ENCODE measurements at regions of chr9 and their contacts with region 1.

Region 1: GRCh38 chr9:130343445-130343918 is 77.9 kb downstream of the HMCN2 start:
- DNase-seq: no peak
- ATAC-seq: peak in 1 of 2 experiments; percentile 62; a peak in 3 of 6 replicates
- H3K4me3 ChIP-seq: no peak overlapping the region
- H3K27ac ChIP-seq: no peak overlapping the region
- H3K4me1 ChIP-seq: no peaks in the 10 kb centered on the region
- CTCF ChIP-seq: peak; percentile 74
- EP300 ChIP-seq: no peak
- POLR2A ChIP-seq: no peak
- RAD21 ChIP-seq: peak; percentile 77 to 82

Region 2: GRCh38 chr9:130327070-130327780 is 16.3 kb before region 1 on chr9:
- CTCF ChIA-PET with region 1: interaction called, 11 read pairs
- POLR2A ChIA-PET with region 1: no interaction called
- DNase-seq: peak in 1 of 2 experiments; percentile 41
- ATAC-seq: peak; percentile 55 to 77; a peak in 4 of 6 replicates
- H3K4me3 ChIP-seq: no peak overlapping the region
- H3K27ac ChIP-seq: no peak overlapping the region
- H3K4me1 ChIP-seq: peaks cover 12% of the 10 kb centered on the region; the same call in 2 of the 3 replicates
- CTCF ChIP-seq: peak; percentile 12; the same call in 1 of the 3 replicates
- EP300 ChIP-seq: no peak
- POLR2A ChIP-seq: no peak
- RAD21 ChIP-seq: 0 out of 5 replicates have a peak, but pooled peaks of 1 of the 2 experiments have one; percentile 9

Region 3: DNA sequence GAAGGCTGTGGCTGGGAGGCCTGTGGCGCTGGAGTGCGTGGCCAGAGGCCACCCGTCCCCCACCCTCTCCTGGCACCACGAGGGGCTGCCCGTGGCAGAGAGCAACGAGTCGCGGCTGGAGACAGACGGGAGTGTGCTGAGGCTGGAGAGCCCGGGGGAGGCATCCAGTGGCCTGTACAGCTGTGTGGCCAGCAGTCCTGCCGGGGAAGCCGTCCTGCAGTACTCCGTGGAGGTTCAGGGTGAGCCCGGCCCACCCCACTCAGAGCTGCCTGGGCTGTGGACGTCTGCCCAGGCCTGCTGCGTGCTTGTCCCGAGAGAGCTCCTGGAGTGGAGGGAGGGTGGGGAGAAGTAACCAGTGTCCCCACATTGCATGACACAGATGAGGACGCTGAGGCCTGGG is 11.3 kb after region 1 on chr9:
- CTCF ChIA-PET with region 1: interaction called, 26 read pairs
- POLR2A ChIA-PET with region 1: no interaction called
- DNase-seq: no peak
- ATAC-seq: no peak; a peak in 1 of 6 replicates
- H3K4me3 ChIP-seq: no peak overlapping the region
- H3K27ac ChIP-seq: no peak overlapping the region
- H3K4me1 ChIP-seq: no peaks in the 10 kb centered on the region
- CTCF ChIP-seq: no peak
- EP300 ChIP-seq: no peak
- POLR2A ChIP-seq: no peak
- RAD21 ChIP-seq: no peak

Measured in A549 (cell line).